CD8-positive, alpha-beta T cell (primary cell): ENCODE measurements at regions of chr2 and their contacts with region 1.

Region 1: GRCh38 chr2:30139131-30139870 is 7.5 kb upstream of the YPEL5 start:
- DNase-seq: peak in 6 of 9 experiments; percentile 9 to 75 (median 54)
- ATAC-seq: peak; percentile 77
- H3K4me3 ChIP-seq: no peak overlapping the region
- H3K4me3 Mint-ChIP-seq: peak overlapping the region; percentile 16
- H3K27ac ChIP-seq: peak overlapping the region in 1 of 2 experiments; percentile 19
- H3K27ac Mint-ChIP-seq: peak overlapping the region; percentile 23
- H3K4me1 ChIP-seq: peaks cover 10% of the 10 kb centered on the region
- H3K4me1 Mint-ChIP-seq: peaks cover 17% of the 10 kb centered on the region
- H3K27me3 ChIP-seq: peaks cover 0 to 2% of the 10 kb centered on the region in 2 experiments
- H3K27me3 Mint-ChIP-seq: peaks cover 7% of the 10 kb centered on the region
- CTCF ChIP-seq: no peak

Region 2: GRCh38 chr2:30098266-30099005 is 40.9 kb before region 1 on chr2:
- CTCF ChIA-PET with region 1: no interaction called
- POLR2A ChIA-PET with region 1: no interaction called
- intact Hi-C with region 1: loop called in 1 of 2 experiments (anchors 5 kb)
- DNase-seq: no peak
- ATAC-seq: no peak
- H3K4me3 ChIP-seq: no peak overlapping the region
- H3K4me3 Mint-ChIP-seq: no peak overlapping the region
- H3K27ac ChIP-seq: no peak overlapping the region
- H3K27ac Mint-ChIP-seq: no peak overlapping the region
- H3K4me1 ChIP-seq: no peaks in the 10 kb centered on the region
- H3K4me1 Mint-ChIP-seq: no peaks in the 10 kb centered on the region
- H3K27me3 ChIP-seq: no peaks in the 10 kb centered on the region
- H3K27me3 Mint-ChIP-seq: peaks cover 22% of the 10 kb centered on the region
- CTCF ChIP-seq: no peak